Gastrocnemius medialis (tissue), 4 donors: ENCODE measurements at regions of chr1 and their contacts with region 1.

Region 1: DNA sequence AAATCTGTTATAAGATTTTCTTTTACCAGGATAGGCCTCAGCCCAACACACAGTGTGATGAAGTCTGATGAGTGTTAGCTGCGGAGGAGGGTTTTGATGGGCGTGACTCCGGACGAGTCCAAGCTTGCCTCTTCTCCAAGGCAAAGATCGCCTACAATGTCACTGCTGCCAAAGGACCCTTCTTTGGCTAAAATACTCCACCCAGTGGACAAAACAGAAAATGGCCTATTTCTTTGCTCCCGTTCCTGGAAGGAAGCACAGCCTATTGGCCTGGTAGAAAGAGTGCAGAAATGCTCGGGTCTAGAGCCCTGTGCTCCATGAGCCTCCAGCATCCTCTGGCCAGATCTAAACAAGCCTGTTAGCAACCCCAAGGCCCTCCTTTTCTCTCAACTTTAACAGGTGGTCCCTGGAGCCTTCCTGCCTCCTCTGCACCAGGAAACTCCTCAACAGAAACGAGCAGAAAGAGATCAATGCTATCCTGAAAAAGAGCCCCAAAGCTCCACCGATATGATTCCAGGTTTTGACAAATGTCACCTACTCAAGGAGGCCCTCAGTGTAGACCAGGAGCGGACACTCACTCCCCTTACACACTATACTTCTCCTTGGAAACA is 3.4 kb upstream of the CASQ2 start:
- DNase-seq: peak; percentile 60 to 75
- ATAC-seq: peak; percentile 74 to 77
- H3K4me3 ChIP-seq: peak overlapping the region in 1 of 4 donors; percentile 21
- H3K27ac ChIP-seq: peak overlapping the region in 3 of 4 donors; percentile 18 to 59 (median 58)
- H3K4me1 ChIP-seq: peaks cover 25 to 30% of the 10 kb centered on the region in 2 donors
- H3K27me3 ChIP-seq: no peaks in the 10 kb centered on the region
- CTCF ChIP-seq: peak; percentile 63 to 85 (median 78)
- POLR2A ChIP-seq: no peak

Region 2: GRCh38 chr1:115189814-115190539 is 582.0 kb before region 1 on chr1:
- in situ Hi-C with region 1: loop called in 2 of 4 experiments (anchors 25 kb)
- intact Hi-C with region 1: loop called (anchors 5 kb)
- DNase-seq: peak in 1 of 2 donors; percentile 38
- ATAC-seq: peak; percentile 81 to 90
- H3K4me3 ChIP-seq: no peak overlapping the region
- H3K27ac ChIP-seq: peak overlapping the region; percentile 80 to 96 (median 88)
- H3K4me1 ChIP-seq: peaks cover 24 to 61% of the 10 kb centered on the region in 2 donors
- H3K27me3 ChIP-seq: no peaks in the 10 kb centered on the region
- CTCF ChIP-seq: no peak
- POLR2A ChIP-seq: peak in 1 of 2 donors; percentile 35

Region 3: GRCh38 chr1:115609021-115609420 is 162.9 kb before region 1 on chr1:
- in situ Hi-C with region 1: loop called in 2 of 4 experiments (anchors 5 to 10 kb)
- intact Hi-C with region 1: loop called (anchors 2 kb)
- DNase-seq: no peak
- ATAC-seq: no peak
- H3K4me3 ChIP-seq: no peak overlapping the region
- H3K27ac ChIP-seq: no peak overlapping the region
- H3K4me1 ChIP-seq: no peaks in the 10 kb centered on the region
- H3K27me3 ChIP-seq: no peaks in the 10 kb centered on the region
- CTCF ChIP-seq: no peak
- POLR2A ChIP-seq: no peak

Region 4: GRCh38 chr1:115677182-115677555 is 94.8 kb before region 1 on chr1:
- in situ Hi-C with region 1: no loop called
- intact Hi-C with region 1: no loop called
- DNase-seq: no peak
- ATAC-seq: no peak
- H3K4me3 ChIP-seq: no peak overlapping the region
- H3K27ac ChIP-seq: no peak overlapping the region
- H3K4me1 ChIP-seq: peaks cover 20 to 22% of the 10 kb centered on the region in 2 donors
- H3K27me3 ChIP-seq: no peaks in the 10 kb centered on the region
- CTCF ChIP-seq: no peak
- POLR2A ChIP-seq: no peak

Region 5: GRCh38 chr1:115717541-115717940 is 54.4 kb before region 1 on chr1:
- in situ Hi-C with region 1: loop called (anchors 5 kb)
- intact Hi-C with region 1: loop called (anchors 1 kb)
- DNase-seq: peak; percentile 20 to 63
- ATAC-seq: peak; percentile 59 to 78
- H3K4me3 ChIP-seq: no peak overlapping the region
- H3K27ac ChIP-seq: no peak overlapping the region
- H3K4me1 ChIP-seq: no peaks in the 10 kb centered on the region
- H3K27me3 ChIP-seq: no peaks in the 10 kb centered on the region
- CTCF ChIP-seq: peak; percentile 53 to 78 (median 72)
- POLR2A ChIP-seq: no peak

Region 6: DNA sequence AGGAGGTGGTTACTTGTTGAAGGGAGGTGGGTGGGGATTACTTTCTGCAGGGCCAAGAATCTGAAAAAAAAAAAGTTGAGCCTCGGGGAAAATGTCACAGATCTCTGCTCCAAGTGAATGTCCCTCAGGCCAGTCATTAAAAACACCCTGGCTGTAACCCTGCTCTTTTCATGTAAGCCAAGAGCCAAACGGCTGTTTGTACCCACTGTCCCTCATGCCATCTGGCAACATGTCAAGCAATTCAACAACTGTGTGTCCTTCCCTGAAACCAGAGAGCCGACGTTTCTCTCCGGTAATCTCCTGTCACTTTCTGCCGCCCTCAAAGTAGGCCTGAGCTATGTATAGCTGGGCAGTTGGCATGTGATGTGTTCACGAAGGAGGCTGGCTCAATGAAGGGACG is 18.1 kb before region 1 on chr1:
- in situ Hi-C with region 1: no loop called
- intact Hi-C with region 1: loop called (anchors 1 kb)
- DNase-seq: peak; percentile 94
- ATAC-seq: peak; percentile 89 to 90
- H3K4me3 ChIP-seq: peak overlapping the region in 2 of 4 donors; percentile 3 to 13
- H3K27ac ChIP-seq: peak overlapping the region; percentile 87 to 91 (median 90)
- H3K4me1 ChIP-seq: peaks cover 65 to 78% of the 10 kb centered on the region in 2 donors
- H3K27me3 ChIP-seq: no peaks in the 10 kb centered on the region
- CTCF ChIP-seq: no peak
- POLR2A ChIP-seq: peak in 1 of 2 donors; percentile 42

Region 7: DNA sequence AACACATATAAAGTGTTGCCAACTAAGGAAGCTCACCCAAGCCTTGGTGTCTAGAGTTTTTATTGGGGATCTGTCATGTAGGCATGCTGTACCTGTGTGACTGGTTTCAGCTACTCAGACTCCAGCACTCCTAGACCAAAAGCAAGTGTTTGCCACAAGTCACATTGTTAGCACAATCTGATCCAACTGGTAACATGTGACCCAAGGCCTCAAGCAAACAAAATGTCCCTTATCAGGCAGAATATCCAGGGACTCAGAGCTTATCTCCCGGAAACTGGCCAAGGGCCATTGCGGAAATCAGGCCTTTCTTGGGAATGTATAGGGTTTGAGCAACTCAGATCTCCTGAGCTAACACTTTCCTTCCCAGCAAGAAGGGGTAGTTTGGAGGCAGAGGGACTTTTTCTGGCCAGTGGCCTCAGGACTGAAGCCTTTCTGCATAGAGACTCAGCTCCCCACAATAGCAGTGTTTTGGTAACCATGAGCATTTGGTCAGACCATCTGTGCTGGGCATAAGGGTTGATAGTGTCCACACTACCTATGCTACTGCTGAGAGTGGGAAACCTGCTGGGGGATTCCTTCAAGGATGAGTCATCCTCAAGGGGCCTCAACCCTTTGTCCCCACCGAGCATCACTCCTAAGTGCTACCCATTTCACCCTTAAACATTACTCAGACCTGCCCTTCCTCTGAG is 39.3 kb after region 1 on chr1:
- in situ Hi-C with region 1: no loop called
- intact Hi-C with region 1: no loop called
- DNase-seq: no peak
- ATAC-seq: no peak
- H3K4me3 ChIP-seq: no peak overlapping the region
- H3K27ac ChIP-seq: no peak overlapping the region
- H3K4me1 ChIP-seq: no peaks in the 10 kb centered on the region
- H3K27me3 ChIP-seq: no peaks in the 10 kb centered on the region
- CTCF ChIP-seq: no peak
- POLR2A ChIP-seq: no peak

Region 8: GRCh38 chr1:115822117-115822516 is 50.2 kb after region 1 on chr1:
- in situ Hi-C with region 1: no loop called
- intact Hi-C with region 1: no loop called
- DNase-seq: no peak
- ATAC-seq: no peak
- H3K4me3 ChIP-seq: no peak overlapping the region
- H3K27ac ChIP-seq: no peak overlapping the region
- H3K4me1 ChIP-seq: no peaks in the 10 kb centered on the region
- H3K27me3 ChIP-seq: peaks cover 5 to 7% (median 6%) of the 10 kb centered on the region in 3 donors
- CTCF ChIP-seq: no peak
- POLR2A ChIP-seq: no peak